ENCODE measurements at regions of chr19 and their contacts with region 1.

Region 1: GRCh38 chr19:5686647-5687359 is 3.3 kb upstream of the RPL36 start:
- DNase-seq: peak; percentile 70 to 97
- H3K4me3 ChIP-seq: peak overlapping the region; percentile 62
- H3K27ac ChIP-seq: no peak overlapping the region
- H3K4me1 ChIP-seq: no peaks in the 10 kb centered on the region
- H3K27me3 ChIP-seq: no peaks in the 10 kb centered on the region
- CTCF ChIP-seq: peak; percentile 71

Region 2: DNA sequence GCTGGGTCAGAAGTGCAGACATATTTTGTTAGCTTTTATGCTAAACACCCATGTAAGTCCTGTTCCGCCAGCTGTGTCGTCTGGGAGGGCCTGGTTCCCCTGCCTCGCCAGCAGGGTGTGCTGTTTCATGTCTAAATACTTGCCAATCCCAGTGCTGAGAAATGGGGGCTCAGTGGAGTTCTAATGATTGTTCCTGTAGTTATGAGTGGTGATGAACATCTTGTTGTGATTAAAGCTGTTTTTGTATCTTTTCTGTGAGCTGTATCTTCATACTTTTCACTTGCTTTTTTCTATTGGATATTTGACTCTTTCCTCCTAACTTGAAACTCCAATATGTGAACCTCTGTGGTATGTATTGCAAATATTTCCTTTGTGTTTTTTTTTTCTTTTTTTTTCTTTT is 685.2 kb before region 1 on chr19:
- CTCF ChIA-PET with region 1: no interaction called
- POLR2A ChIA-PET with region 1: interaction called, 19 read pairs
- intact Hi-C with region 1: no loop called
- DNase-seq: peak; percentile 12 to 51
- H3K4me3 ChIP-seq: peak overlapping the region; percentile 21; the same call in 1 of the 2 replicates
- H3K27ac ChIP-seq: peak overlapping the region; percentile 89
- H3K4me1 ChIP-seq: peaks cover 18% of the 10 kb centered on the region
- H3K27me3 ChIP-seq: no peaks in the 10 kb centered on the region
- CTCF ChIP-seq: peak; percentile 76

Region 3: GRCh38 chr19:5536337-5536894 is 150.4 kb before region 1 on chr19:
- CTCF ChIA-PET with region 1: no interaction called
- POLR2A ChIA-PET with region 1: interaction called, 10 read pairs
- intact Hi-C with region 1: no loop called
- DNase-seq: peak in 1 of 2 experiments; percentile 63
- H3K4me3 ChIP-seq: peak overlapping the region; percentile 47; the same call in 1 of the 2 replicates
- H3K27ac ChIP-seq: peak overlapping the region; percentile 53
- H3K4me1 ChIP-seq: peaks cover 10% of the 10 kb centered on the region
- H3K27me3 ChIP-seq: no peaks in the 10 kb centered on the region
- CTCF ChIP-seq: no peak

Region 4: GRCh38 chr19:5839065-5840017 is 152.5 kb after region 1 on chr19 and contains the start of gene FUT6:
- CTCF ChIA-PET with region 1: interaction called, 14 read pairs
- POLR2A ChIA-PET with region 1: no interaction called
- intact Hi-C with region 1: no loop called
- DNase-seq: no peak
- H3K4me3 ChIP-seq: no peak within 1 kb of the TSS
- H3K27ac ChIP-seq: no peak within 1 kb of the TSS
- H3K4me1 ChIP-seq: no peaks in the 10 kb centered on the region
- H3K27me3 ChIP-seq: no peaks in the 10 kb centered on the region
- CTCF ChIP-seq: no peak
- total RNA-seq, gene FUT6: 0.43 and 0.55 TPM in 2 replicates

Region 5: DNA sequence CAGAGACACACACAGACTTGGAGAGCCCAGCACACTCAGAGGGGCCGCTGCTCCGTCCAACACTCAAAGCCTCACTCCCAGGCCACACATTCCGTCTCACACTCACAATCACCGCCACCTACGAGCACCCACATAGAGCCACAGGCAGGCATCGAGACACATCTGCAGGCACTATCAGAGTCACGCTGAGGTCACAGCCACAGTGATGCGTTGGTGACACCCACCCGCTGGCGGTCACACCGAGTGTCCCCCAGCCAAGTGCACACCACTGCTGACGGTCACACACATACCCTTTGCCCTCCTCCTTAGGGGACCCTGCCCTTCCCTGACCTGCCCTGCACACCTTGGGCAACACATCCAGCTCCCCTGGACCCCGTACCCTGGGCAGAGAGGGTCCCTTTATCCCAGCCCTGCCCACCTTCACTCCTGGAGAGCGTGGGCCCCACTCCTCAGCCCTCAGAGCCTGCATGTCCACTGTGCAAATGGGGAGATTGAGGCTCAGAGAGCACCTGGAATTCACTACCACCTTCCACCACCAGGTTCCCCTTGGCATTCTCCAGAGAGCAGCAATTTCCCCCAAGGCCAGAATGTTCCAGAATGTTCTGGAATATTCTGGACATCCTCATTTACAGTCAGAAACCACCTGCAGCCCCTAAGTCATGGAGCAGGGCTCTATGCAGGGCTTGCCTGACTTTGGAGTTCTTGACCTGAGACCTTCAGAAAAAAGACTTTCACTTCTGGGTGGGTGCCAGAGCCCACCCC is 178.1 kb after region 1 on chr19:
- CTCF ChIA-PET with region 1: no interaction called
- POLR2A ChIA-PET with region 1: no interaction called
- intact Hi-C with region 1: no loop called
- DNase-seq: no peak
- H3K4me3 ChIP-seq: no peak overlapping the region
- H3K27ac ChIP-seq: no peak overlapping the region
- H3K4me1 ChIP-seq: no peaks in the 10 kb centered on the region
- H3K27me3 ChIP-seq: no peaks in the 10 kb centered on the region
- CTCF ChIP-seq: no peak; the same call in 1 of the 2 replicates

Measured in PC-9 (cell line).